Activated T-helper 1 cell treated with anti-CD3 and anti-CD28 coated beads, Interleukin-12 subunit alpha, Interleukin-12 subunit beta, Interleukin-2, Interleukin-4 antibody, amounts not matched to agents 30 ng/mL and 10 ng/mL and 1 ng/mL, durations not matched to agents 14 hours and 24 hours and 36 hours (primary cell): ENCODE measurements at regions of chr6 and their contacts with region 1.

Region 1: DNA sequence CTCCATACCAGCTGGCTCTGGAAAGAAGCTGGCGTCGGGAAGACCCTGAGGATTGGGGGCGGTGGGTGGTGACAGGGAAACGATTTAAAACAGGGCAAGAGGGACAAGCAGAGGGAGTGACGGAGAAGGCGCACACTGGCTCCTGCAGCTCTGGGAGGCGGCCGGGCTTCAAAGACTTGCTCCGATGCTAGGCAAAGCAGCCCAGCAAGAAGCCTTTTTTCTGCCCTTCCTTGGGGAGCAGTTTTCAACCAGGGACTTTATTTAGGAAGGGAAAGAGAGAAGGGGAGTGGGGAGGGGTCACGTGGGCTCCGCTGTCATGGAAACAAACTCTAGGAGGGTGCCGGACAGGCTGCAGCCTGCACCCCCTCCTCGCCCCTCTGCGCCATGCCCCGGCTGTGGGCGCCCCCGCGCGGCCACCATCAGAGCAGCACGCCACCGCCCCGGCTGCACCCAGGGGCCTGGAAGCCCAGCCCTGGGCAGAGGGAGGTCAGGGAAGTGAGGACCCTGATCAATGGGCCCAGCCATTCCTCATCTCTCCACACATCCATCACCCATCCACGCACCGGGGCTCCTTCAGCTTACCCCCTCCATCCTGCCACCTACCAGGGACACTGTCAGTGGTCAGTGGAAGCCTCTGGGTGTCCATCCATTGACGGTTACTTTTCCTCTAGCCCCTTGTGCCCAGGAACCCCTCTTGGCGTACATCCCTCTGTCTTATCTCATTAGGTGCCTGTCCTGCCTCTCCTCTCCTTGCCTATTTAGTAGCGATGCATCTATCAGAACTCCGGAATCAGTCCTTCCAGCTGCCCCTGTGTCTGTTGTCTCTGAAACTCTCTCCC is 66.6 kb upstream of the CCDC167 start:
- DNase-seq: peak; percentile 68
- H3K4me3 Mint-ChIP-seq: peak overlapping the region; percentile 24
- H3K27ac Mint-ChIP-seq: no peak overlapping the region
- H3K4me1 Mint-ChIP-seq: no peaks in the 10 kb centered on the region
- H3K27me3 Mint-ChIP-seq: peaks cover 21% of the 10 kb centered on the region

Region 2: GRCh38 chr6:36235309-36235708 is 1331.0 kb before region 1 on chr6:
- intact Hi-C with region 1: no loop called
- DNase-seq: no peak
- H3K4me3 Mint-ChIP-seq: no peak overlapping the region
- H3K27ac Mint-ChIP-seq: no peak overlapping the region
- H3K4me1 Mint-ChIP-seq: peaks cover 6% of the 10 kb centered on the region
- H3K27me3 Mint-ChIP-seq: no peaks in the 10 kb centered on the region

Region 3: GRCh38 chr6:37381579-37381978 is 184.8 kb before region 1 on chr6:
- intact Hi-C with region 1: loop called (anchors 2 kb)
- DNase-seq: peak; percentile 2
- H3K4me3 Mint-ChIP-seq: no peak overlapping the region
- H3K27ac Mint-ChIP-seq: no peak overlapping the region
- H3K4me1 Mint-ChIP-seq: no peaks in the 10 kb centered on the region
- H3K27me3 Mint-ChIP-seq: no peaks in the 10 kb centered on the region

Region 4: DNA sequence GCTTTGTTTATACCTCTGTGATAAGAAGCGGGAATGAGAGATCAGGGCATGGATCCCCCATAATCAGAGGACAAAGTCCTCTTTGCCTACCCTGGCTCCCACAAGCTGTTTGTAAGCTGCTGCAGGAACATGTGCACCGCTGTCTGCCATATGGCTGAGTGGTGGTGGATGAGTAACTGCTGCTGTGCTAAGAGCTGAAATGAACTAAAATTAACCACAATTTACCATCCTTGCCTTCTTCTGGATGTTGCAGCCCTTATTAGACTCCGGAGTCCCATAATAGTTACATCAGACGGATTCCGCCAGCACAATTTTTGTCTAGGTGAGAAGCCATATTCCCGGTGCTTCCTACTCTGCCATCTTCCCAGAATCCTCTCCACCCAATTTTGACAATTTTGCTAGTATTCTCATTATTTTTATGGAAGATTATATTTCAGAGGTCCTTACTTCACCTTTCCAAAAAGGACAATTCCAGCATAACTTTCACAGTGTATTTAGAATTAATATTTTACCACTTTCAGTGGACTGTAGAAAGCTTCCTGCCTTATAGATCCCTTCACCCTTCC is 139.3 kb before region 1 on chr6:
- intact Hi-C with region 1: no loop called
- DNase-seq: no peak
- H3K4me3 Mint-ChIP-seq: no peak overlapping the region
- H3K27ac Mint-ChIP-seq: no peak overlapping the region
- H3K4me1 Mint-ChIP-seq: peaks cover under 1% of the 10 kb centered on the region
- H3K27me3 Mint-ChIP-seq: peaks cover 17% of the 10 kb centered on the region

Region 5: DNA sequence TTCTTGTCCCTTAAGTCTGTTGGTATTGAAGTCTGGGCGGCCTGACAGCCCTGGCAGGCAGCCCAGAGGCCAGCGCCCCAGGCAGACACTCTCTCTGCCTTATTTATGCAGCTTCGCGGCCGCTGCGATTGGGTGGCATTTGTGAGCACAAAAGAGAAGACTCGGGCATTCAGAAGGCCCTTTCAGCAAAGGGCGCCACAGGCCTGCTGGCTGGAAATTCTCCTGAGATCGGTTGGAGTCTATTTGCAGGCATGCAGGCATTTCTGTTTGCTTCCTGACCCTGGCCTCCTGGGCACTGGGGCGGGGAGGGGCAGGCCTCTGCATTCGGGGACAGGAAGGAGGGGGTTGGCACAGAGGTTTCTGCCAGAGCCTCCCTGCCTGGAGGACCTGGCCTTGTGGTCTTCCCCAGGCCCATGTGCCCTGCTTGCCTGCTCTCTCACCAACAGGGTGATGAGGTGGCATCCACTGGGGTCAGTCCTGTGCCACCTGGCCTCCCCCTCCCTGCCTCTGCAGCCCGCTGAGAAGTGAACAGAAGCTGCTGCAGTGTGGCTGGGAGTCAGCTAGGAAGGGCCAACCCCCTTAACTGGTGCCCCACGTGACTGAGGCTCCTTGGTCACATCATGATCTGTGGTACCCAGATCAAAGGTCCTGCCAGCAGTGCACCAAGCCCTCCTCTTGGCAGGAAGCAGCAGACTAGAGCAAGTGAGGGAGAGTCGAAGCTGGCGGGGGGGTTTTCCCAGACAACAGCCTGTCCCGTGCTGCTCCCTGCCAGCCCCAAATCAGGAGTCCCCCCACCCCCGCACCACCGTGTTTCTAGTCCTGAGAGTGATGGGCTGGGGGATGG is 50.0 kb before region 1 on chr6:
- intact Hi-C with region 1: loop called (anchors 1 kb)
- DNase-seq: peak; percentile 81
- H3K4me3 Mint-ChIP-seq: peak overlapping the region; percentile 75
- H3K27ac Mint-ChIP-seq: peak overlapping the region; percentile 92
- H3K4me1 Mint-ChIP-seq: peaks cover 57% of the 10 kb centered on the region
- H3K27me3 Mint-ChIP-seq: peaks cover 9% of the 10 kb centered on the region

Region 6: GRCh38 chr6:37550191-37550965 is 16.0 kb before region 1 on chr6:
- intact Hi-C with region 1: loop called (anchors 2 kb)
- DNase-seq: no peak
- H3K4me3 Mint-ChIP-seq: no peak overlapping the region
- H3K27ac Mint-ChIP-seq: no peak overlapping the region
- H3K4me1 Mint-ChIP-seq: peaks cover 41% of the 10 kb centered on the region
- H3K27me3 Mint-ChIP-seq: peaks cover 11% of the 10 kb centered on the region